ENCODE measurements at regions of chr1 and their contacts with region 1.

Region 1: GRCh38 chr1:172895050-172895460 is 155.7 kb downstream of the TNFSF18 start:
- DNase-seq: peak; percentile 40
- H3K4me3 Mint-ChIP-seq: no peak overlapping the region
- H3K27ac Mint-ChIP-seq: peak overlapping the region; percentile 9
- H3K4me1 Mint-ChIP-seq: peaks cover 42% of the 10 kb centered on the region
- H3K27me3 Mint-ChIP-seq: peaks cover 4% of the 10 kb centered on the region

Region 2: DNA sequence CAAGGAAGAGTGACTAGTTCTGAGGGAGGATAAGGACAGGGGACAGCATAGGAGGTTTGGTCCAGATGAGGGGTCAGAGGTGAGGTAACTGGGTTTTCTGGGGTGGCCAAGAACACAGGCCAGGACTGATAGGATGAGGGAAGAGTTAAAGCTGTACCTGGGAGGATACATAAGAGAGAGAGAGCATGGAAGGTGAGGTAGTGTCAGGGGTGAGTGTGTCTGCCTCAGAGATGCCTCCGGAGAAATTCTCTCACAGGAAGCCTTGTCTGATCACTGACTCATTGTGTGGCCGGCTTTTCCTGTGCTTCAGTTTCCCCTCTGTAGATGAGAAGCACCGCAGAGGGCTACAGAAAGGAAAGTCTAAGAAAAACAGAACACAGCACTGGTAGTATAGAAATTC is 195.9 kb before region 1 on chr1:
- CTCF ChIA-PET with region 1: no interaction called
- intact Hi-C with region 1: loop called (anchors 1 kb)
- DNase-seq: peak; percentile 88
- H3K4me3 Mint-ChIP-seq: peak overlapping the region; percentile 36
- H3K27ac Mint-ChIP-seq: peak overlapping the region; percentile 89
- H3K4me1 Mint-ChIP-seq: peaks cover 53% of the 10 kb centered on the region
- H3K27me3 Mint-ChIP-seq: no peaks in the 10 kb centered on the region

Region 3: DNA sequence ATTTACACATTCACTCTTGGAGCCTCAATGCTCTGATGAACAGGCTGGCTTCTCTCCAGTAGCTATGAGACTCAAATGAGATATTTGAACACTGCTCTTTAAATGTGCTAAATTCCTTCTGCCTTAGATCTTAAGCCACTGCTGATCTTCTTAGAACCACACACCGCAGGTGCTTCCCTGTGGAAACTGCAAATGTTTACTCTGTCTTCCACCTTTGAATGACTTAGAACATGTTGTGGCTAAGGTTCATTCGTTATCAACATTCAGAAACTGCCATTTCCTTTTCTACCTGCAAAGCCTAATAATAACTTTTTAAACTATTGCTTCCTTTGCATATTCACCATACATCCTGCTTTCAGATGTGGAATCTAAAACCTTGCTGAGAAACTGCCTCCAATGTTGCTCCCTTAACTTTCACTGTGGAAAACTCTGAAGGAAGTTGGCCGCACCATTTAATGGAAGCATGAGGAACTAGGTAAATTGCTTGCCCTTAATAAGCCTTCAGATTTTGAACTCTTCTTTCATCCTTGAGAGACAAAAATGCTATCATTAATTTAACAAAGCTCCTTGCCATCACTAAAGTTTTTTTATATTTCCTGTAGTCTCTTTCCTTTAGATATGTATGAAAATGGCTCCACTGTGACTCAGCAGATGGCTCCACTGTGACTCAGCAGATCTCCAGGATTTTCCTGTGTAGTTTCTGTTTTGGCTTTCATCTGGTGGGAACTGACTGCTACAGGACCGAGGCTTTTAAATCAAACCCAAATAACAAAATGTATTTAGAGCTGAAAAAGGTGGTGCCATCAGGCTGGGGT is 11.9 kb after region 1 on chr1:
- CTCF ChIA-PET with region 1: no interaction called
- intact Hi-C with region 1: no loop called
- DNase-seq: peak; percentile 46
- H3K4me3 Mint-ChIP-seq: no peak overlapping the region
- H3K27ac Mint-ChIP-seq: no peak overlapping the region
- H3K4me1 Mint-ChIP-seq: peaks cover 19% of the 10 kb centered on the region
- H3K27me3 Mint-ChIP-seq: no peaks in the 10 kb centered on the region

Region 4: GRCh38 chr1:172966844-172967540 is 71.9 kb after region 1 on chr1:
- CTCF ChIA-PET with region 1: no interaction called
- intact Hi-C with region 1: loop called (anchors 1 kb)
- DNase-seq: no peak
- H3K4me3 Mint-ChIP-seq: no peak overlapping the region
- H3K27ac Mint-ChIP-seq: no peak overlapping the region
- H3K4me1 Mint-ChIP-seq: peaks cover 18% of the 10 kb centered on the region
- H3K27me3 Mint-ChIP-seq: peaks cover 2% of the 10 kb centered on the region

Region 5: GRCh38 chr1:173330149-173330951 is 435.3 kb after region 1 on chr1:
- CTCF ChIA-PET with region 1: interaction called, 4 read pairs
- intact Hi-C with region 1: loop called (anchors 1 kb)
- DNase-seq: no peak
- H3K4me3 Mint-ChIP-seq: no peak overlapping the region
- H3K27ac Mint-ChIP-seq: no peak overlapping the region
- H3K4me1 Mint-ChIP-seq: peaks cover 25% of the 10 kb centered on the region
- H3K27me3 Mint-ChIP-seq: no peaks in the 10 kb centered on the region